ENCODE measurements at regions of chr21 and their contacts with region 1.

Region 1: GRCh38 chr21:46356494-46357334 is 32.8 kb downstream of the PCNT start:
- DNase-seq: no peak
- ATAC-seq: no peak
- H3K4me3 ChIP-seq: no peak overlapping the region
- H3K4me1 ChIP-seq: no peaks in the 10 kb centered on the region
- CTCF ChIP-seq: no peak

Region 2: DNA sequence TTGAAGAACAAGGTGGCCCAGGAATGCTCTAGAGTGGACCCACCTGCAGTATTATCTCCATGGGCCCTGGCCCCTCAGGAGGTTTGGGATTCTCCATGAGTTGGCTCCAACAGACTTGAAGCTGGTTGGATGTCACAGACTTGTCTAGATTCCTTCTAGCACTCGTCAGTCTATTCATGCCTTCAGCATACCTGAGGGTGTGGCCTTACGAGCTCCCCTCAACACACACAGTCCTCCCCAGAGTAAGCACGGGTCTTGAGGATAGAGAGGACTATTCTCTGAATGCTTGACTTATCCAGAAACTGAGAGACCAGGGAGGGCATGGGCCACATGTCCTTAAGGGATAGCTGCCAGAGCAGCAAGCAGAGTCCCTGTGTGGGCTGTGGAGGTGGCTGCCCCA is 421.1 kb before region 1 on chr21:
- intact Hi-C with region 1: no loop called
- DNase-seq: no peak
- ATAC-seq: no peak
- H3K4me3 ChIP-seq: no peak overlapping the region
- H3K4me1 ChIP-seq: no peaks in the 10 kb centered on the region
- CTCF ChIP-seq: no peak

Region 3: DNA sequence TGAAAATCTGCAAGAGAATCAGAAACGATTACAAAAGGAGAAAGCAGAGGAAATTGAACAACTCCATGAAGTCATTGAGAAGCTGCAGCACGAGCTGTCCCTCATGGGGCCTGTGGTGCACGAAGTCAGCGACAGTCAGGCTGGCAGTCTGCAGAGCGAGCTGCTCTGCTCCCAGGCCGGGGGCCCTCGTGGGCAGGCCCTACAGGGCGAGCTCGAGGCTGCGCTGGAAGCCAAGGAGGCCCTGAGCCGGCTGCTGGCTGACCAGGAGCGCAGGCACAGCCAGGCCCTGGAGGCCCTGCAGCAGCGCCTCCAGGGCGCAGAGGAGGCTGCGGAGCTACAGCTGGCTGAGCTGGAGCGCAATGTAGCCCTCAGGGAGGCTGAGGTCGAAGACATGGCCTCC is 54.5 kb after region 1 on chr21:
- intact Hi-C with region 1: loop called in 1 of 2 experiments (anchors 10 kb)
- DNase-seq: peak in 1 of 3 donors; percentile 31
- ATAC-seq: no peak
- H3K4me3 ChIP-seq: no peak overlapping the region
- H3K4me1 ChIP-seq: no peaks in the 10 kb centered on the region
- CTCF ChIP-seq: no peak